Colonic mucosa (tissue), 4 donors: ENCODE measurements at regions of chr6 and their contacts with region 1.

Region 1: GRCh38 chr6:42901536-42901957 is 14.3 kb upstream of the PTCRA start:
- DNase-seq: peak; percentile 86
- H3K4me3 ChIP-seq: no peak overlapping the region
- H3K27ac ChIP-seq: no peak overlapping the region
- H3K4me1 ChIP-seq: no peaks in the 10 kb centered on the region
- H3K27me3 ChIP-seq: no peaks in the 10 kb centered on the region
- CTCF ChIP-seq: peak; percentile 78

Region 2: GRCh38 chr6:43143235-43144124 is 241.9 kb after region 1 on chr6:
- intact Hi-C with region 1: loop called (anchors 5 kb)
- DNase-seq: peak; percentile 82
- H3K4me3 ChIP-seq: no peak overlapping the region
- H3K27ac ChIP-seq: no peak overlapping the region
- H3K4me1 ChIP-seq: no peaks in the 10 kb centered on the region
- H3K27me3 ChIP-seq: no peaks in the 10 kb centered on the region
- CTCF ChIP-seq: peak; percentile 92